GM18951 (cell line): ENCODE measurements at regions of chr19 and their contacts with region 1.

Region 1: DNA sequence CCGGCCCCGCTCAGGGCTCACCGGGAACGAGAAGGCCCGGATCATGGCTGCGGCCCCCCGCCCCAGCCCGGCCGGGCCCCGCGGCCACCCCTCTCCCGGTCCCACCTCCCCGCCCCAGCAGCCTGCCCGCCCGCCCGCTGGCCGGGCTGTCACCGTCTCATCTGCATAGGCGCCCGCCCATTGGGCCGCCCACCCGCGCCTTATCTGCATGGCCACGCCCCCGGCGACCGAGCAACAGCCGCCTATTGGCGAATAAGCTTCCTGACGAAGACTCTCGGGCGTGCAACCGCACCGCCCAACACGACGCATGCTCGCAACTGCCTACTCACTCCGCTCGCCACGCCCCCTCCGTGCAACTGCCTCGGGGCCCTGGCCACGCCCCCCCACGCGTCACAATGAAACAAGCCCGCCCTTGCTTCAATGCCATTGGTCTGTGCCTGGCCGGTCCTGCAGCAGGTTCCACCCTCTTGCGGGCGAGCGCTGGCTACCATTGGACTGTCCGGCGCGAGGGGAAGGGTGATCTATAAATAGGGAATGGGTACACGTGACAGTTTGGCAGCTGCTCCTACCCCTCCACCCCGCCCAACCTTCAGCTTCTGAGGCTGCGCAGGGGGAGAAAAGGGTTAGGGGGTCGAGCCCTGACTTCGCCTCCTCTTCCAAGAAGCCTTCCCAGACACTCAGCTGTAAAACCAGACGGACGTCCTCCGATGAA is at the start of gene DACT3:
- POLR2A ChIP-seq: no peak

Region 2: GRCh38 chr19:46542428-46543230 is 118.5 kb before region 1 on chr19:
- in situ Hi-C with region 1: loop called (anchors 25 kb)
- POLR2A ChIP-seq: no peak

Region 3: DNA sequence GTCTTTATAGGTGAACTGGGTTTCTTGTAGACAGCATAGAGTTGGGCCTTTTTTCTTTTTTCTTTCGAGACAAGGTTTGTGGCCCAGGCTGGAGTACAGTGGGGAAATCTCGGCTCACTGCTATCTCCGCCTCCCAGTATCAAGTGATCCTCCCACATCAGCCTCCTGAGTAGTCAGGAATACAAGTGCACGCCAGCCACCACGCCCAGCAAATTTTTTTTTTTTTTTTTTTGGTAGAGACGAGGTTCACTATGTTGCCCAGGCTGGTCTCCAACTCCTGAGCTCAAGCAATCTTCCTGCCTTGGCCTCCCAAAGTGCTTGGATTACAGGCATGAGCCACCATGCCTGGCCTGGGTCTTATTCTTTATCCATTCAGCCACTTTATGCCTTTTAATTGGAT is 65.2 kb before region 1 on chr19:
- in situ Hi-C with region 1: no loop called
- POLR2A ChIP-seq: no peak